ENCODE measurements at regions of chr15 and their contacts with region 1.

Region 1: DNA sequence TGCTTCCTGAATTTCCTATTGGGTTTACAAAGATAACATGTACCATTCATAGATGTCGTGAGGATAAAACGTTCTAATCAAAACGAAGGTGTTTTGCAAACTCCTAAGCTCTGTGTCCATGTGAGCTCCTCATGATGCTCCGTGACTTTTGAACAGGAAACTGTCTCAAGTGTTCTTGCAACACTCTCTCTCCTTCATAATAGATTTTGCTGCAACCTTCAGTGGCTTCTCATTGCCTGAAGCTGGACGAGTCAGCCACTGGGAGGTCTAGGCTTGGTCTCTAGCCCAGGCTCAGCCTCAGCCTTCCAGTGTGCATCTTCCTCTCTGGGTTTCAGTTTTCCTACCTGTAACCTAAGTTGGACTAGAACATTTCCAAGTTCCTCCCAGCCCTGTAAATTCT is 18.7 kb upstream of the BCL2A1 start:
- DNase-seq: no peak
- H3K4me3 Mint-ChIP-seq: no peak overlapping the region
- H3K27ac Mint-ChIP-seq: peak overlapping the region; percentile 16
- H3K4me1 Mint-ChIP-seq: peaks cover 14% of the 10 kb centered on the region
- H3K27me3 Mint-ChIP-seq: peaks cover 5% of the 10 kb centered on the region

Region 2: GRCh38 chr15:79380755-79381497 is 608.8 kb before region 1 on chr15:
- intact Hi-C with region 1: loop called (anchors 1 kb)
- DNase-seq: peak; percentile 50
- H3K4me3 Mint-ChIP-seq: no peak overlapping the region
- H3K27ac Mint-ChIP-seq: no peak overlapping the region
- H3K4me1 Mint-ChIP-seq: no peaks in the 10 kb centered on the region
- H3K27me3 Mint-ChIP-seq: no peaks in the 10 kb centered on the region

Region 3: GRCh38 chr15:79769069-79769481 is 220.6 kb before region 1 on chr15:
- intact Hi-C with region 1: loop called (anchors 1 kb)
- DNase-seq: no peak
- H3K4me3 Mint-ChIP-seq: no peak overlapping the region
- H3K27ac Mint-ChIP-seq: no peak overlapping the region
- H3K4me1 Mint-ChIP-seq: no peaks in the 10 kb centered on the region
- H3K27me3 Mint-ChIP-seq: peaks cover 15% of the 10 kb centered on the region

Region 4: GRCh38 chr15:79896637-79897379 is 92.9 kb before region 1 on chr15 and contains the start of gene MTHFS:
- intact Hi-C with region 1: loop called (anchors 1 kb)
- DNase-seq: peak; percentile 75
- H3K4me3 Mint-ChIP-seq: peak within 1 kb of the TSS; percentile 97
- H3K27ac Mint-ChIP-seq: peak within 1 kb of the TSS; percentile 96
- H3K4me1 Mint-ChIP-seq: peaks cover 44% of the 10 kb centered on the region
- H3K27me3 Mint-ChIP-seq: no peaks in the 10 kb centered on the region
- total RNA-seq, gene MTHFS: 32.2 and 34.0 TPM in 2 replicates

Region 5: GRCh38 chr15:79923515-79924395 is 65.9 kb before region 1 on chr15:
- intact Hi-C with region 1: loop called (anchors 1 kb)
- DNase-seq: peak; percentile 99
- H3K4me3 Mint-ChIP-seq: peak overlapping the region; percentile 92
- H3K27ac Mint-ChIP-seq: peak overlapping the region; percentile 95
- H3K4me1 Mint-ChIP-seq: peaks cover 16% of the 10 kb centered on the region
- H3K27me3 Mint-ChIP-seq: no peaks in the 10 kb centered on the region